ENCODE measurements at regions of chr19 and their contacts with region 1.

Region 1: GRCh38 chr19:40523322-40524047 is 53.2 kb upstream of the SHKBP1 start:
- H3K4me3 ChIP-seq: no peak overlapping the region; the same call in 1 of the 2 replicates
- H3K27ac ChIP-seq: peak overlapping the region; percentile 47; the same call in 1 of the 2 replicates
- H3K4me1 ChIP-seq: peaks cover 9% of the 10 kb centered on the region
- CTCF ChIP-seq: peak; percentile 99

Region 2: DNA sequence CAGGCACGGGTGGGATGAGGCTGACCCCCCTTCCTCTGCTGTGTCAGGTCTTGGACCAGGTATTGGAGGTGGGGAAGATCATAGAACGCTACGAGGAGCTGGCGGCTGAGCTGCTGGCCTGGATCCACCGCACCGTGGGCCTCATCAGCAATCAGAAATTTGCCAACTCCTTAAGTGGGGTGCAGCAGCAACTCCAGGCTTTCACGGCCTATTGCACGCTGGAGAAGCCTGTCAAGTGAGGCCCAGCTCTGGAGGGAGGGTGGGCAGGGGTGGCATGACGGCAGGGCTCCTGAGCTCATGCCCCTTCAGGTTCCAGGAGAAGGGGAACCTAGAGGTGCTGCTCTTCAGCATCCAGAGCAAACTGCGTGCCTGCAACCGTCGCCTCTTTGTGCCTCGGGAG is 21.4 kb before region 1 on chr19:
- CTCF ChIA-PET with region 1: interaction called, 17 read pairs
- POLR2A ChIA-PET with region 1: no interaction called
- H3K4me3 ChIP-seq: no peak overlapping the region
- H3K27ac ChIP-seq: no peak overlapping the region
- H3K4me1 ChIP-seq: no peaks in the 10 kb centered on the region
- CTCF ChIP-seq: no peak

Region 3: GRCh38 chr19:40549007-40549708 is 25.7 kb after region 1 on chr19:
- CTCF ChIA-PET with region 1: interaction called, 259 read pairs
- POLR2A ChIA-PET with region 1: no interaction called
- H3K4me3 ChIP-seq: peak overlapping the region; percentile 2
- H3K27ac ChIP-seq: no peak overlapping the region
- H3K4me1 ChIP-seq: peaks cover 9% of the 10 kb centered on the region
- CTCF ChIP-seq: peak; percentile 98

Region 4: GRCh38 chr19:40598121-40598917 is 74.8 kb after region 1 on chr19:
- CTCF ChIA-PET with region 1: interaction called, 20 read pairs
- POLR2A ChIA-PET with region 1: interaction called, 3 read pairs
- H3K4me3 ChIP-seq: peak overlapping the region; percentile 33
- H3K27ac ChIP-seq: peak overlapping the region; percentile 60; the same call in 1 of the 2 replicates
- H3K4me1 ChIP-seq: peaks cover 57% of the 10 kb centered on the region
- CTCF ChIP-seq: peak; percentile 99

Region 5: GRCh38 chr19:40640744-40641143 is 117.3 kb after region 1 on chr19:
- CTCF ChIA-PET with region 1: interaction called, 38 read pairs
- POLR2A ChIA-PET with region 1: no interaction called
- H3K4me3 ChIP-seq: no peak overlapping the region
- H3K27ac ChIP-seq: no peak overlapping the region
- H3K4me1 ChIP-seq: peaks cover 10% of the 10 kb centered on the region
- CTCF ChIP-seq: no peak

Measured in HEK293 (cell line).